Activated CD4-positive, alpha-beta T cell treated with anti-CD3 and anti-CD28 coated beads for 36 hours (primary cell): ENCODE measurements at regions of chr15 and their contacts with region 1.

Region 1: GRCh38 chr15:33067941-33068481 is 126.5 kb downstream of the FMN1 start:
- DNase-seq: peak; percentile 24
- ATAC-seq: peak; percentile 66
- H3K4me3 Mint-ChIP-seq: peak overlapping the region; percentile 32
- H3K27ac Mint-ChIP-seq: peak overlapping the region; percentile 34
- H3K4me1 Mint-ChIP-seq: peaks cover 16% of the 10 kb centered on the region
- H3K27me3 Mint-ChIP-seq: peaks cover 6% of the 10 kb centered on the region

Region 2: DNA sequence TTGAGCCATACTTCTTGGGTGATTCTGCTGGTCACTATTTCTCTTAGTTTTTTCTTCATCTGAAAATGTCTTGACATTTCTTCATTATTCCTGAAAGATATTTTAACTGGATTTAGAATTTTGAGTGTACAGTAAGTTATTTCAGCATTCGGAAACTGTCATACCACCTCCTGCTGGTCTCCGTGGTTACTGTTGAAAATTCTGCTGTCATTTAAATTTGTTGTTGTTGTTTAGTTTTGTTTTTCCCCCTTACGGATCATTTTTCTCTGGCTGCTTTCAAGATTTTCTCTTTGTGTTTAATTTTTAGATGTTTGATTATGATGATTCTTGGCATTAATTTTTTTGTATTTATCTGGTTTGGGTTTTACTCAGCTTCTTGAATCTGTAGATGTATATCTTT is 937.2 kb before region 1 on chr15:
- CTCF ChIA-PET with region 1: no interaction called
- POLR2A ChIA-PET with region 1: no interaction called
- intact Hi-C with region 1: no loop called
- DNase-seq: no peak
- ATAC-seq: no peak
- H3K4me3 Mint-ChIP-seq: no peak overlapping the region
- H3K27ac Mint-ChIP-seq: no peak overlapping the region
- H3K4me1 Mint-ChIP-seq: no peaks in the 10 kb centered on the region
- H3K27me3 Mint-ChIP-seq: peaks cover 10% of the 10 kb centered on the region

Region 3: GRCh38 chr15:32818758-32819447 is 249.1 kb before region 1 on chr15:
- CTCF ChIA-PET with region 1: no interaction called
- POLR2A ChIA-PET with region 1: no interaction called
- intact Hi-C with region 1: no loop called
- DNase-seq: no peak
- ATAC-seq: no peak
- H3K4me3 Mint-ChIP-seq: no peak overlapping the region
- H3K27ac Mint-ChIP-seq: no peak overlapping the region
- H3K4me1 Mint-ChIP-seq: no peaks in the 10 kb centered on the region
- H3K27me3 Mint-ChIP-seq: no peaks in the 10 kb centered on the region

Region 4: GRCh38 chr15:32919749-32920414 is 148.1 kb before region 1 on chr15:
- CTCF ChIA-PET with region 1: no interaction called
- POLR2A ChIA-PET with region 1: no interaction called
- intact Hi-C with region 1: no loop called
- DNase-seq: no peak
- ATAC-seq: no peak
- H3K4me3 Mint-ChIP-seq: no peak overlapping the region
- H3K27ac Mint-ChIP-seq: no peak overlapping the region
- H3K4me1 Mint-ChIP-seq: no peaks in the 10 kb centered on the region
- H3K27me3 Mint-ChIP-seq: no peaks in the 10 kb centered on the region

Region 5: DNA sequence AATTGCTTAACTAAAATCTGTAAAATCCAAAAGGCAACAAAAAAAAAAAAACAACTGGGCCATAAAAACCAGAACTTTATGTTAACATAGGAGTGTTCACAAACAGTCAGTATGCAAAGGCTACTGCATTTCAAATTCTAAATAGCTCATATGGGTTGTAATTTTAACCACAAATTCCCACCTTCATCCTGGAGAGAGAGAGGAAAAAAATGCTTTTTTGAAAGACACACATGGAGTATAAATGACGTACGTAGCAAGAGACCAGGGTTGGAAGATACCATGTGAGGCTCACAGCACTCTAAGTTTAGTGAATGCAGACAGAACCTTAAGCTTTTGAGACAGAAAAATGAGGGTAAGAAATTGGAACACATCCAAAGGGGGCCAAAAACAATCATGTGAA is 10.6 kb after region 1 on chr15:
- CTCF ChIA-PET with region 1: no interaction called
- POLR2A ChIA-PET with region 1: no interaction called
- intact Hi-C with region 1: loop called in 1 of 2 experiments (anchors 1 kb)
- DNase-seq: no peak
- ATAC-seq: no peak
- H3K4me3 Mint-ChIP-seq: no peak overlapping the region
- H3K27ac Mint-ChIP-seq: no peak overlapping the region
- H3K4me1 Mint-ChIP-seq: no peaks in the 10 kb centered on the region
- H3K27me3 Mint-ChIP-seq: peaks cover 3% of the 10 kb centered on the region